Thyroid gland (tissue), 4 donors: ENCODE measurements at regions of chr5 and their contacts with region 1.

Region 1: DNA sequence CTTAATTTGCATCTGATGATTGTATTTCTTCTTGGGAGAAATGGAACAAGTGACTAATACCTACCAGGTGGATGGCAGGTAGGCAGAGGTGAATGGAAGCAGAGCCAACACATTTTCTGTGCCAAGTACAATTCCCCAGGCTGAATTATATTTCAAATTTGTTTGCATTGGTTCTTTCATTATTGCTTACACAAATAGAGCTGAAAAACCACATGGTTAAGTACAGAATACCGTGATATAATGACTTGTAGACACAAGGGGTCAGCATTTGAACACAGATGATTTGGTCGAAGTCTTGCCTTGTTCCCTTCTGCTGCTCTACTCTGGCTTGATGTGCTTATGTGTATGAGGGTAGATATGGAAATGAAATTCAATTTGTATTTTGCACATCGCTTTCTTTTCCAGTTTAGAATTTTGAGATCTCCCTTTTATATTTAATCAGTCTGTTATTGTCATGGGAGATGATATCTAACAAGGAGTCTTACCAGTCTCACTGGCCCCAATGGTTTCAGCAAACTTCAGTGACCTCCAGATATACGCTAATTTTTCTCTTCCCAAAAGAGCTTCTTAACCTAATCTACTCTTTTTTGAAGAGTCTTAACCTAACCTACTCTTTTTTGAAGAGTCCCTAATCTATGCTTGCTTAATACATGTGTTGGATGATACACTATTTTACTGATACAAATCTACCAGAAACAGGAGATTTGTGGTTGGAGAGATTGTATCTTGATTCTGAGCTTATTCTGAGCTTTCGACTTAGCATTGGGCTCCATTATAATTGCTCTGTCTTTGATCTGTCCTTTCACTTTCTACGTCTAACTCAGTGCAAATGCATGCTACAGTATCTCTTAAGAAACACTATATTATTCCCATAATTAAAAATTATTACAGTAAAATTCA is 88.1 kb downstream of the PCSK1 start:
- DNase-seq: no peak
- H3K4me3 ChIP-seq: no peak overlapping the region
- H3K27ac ChIP-seq: no peak overlapping the region
- H3K4me1 ChIP-seq: no peaks in the 10 kb centered on the region
- H3K27me3 ChIP-seq: no peaks in the 10 kb centered on the region
- CTCF ChIP-seq: peak in 4 of 6 experiments; percentile 23 to 43 (median 38)
- POLR2A ChIP-seq: no peak

Region 2: GRCh38 chr5:96503501-96504236 is 158.7 kb after region 1 on chr5:
- intact Hi-C with region 1: no loop called
- DNase-seq: no peak
- H3K4me3 ChIP-seq: no peak overlapping the region
- H3K27ac ChIP-seq: no peak overlapping the region
- H3K4me1 ChIP-seq: no peaks in the 10 kb centered on the region
- H3K27me3 ChIP-seq: no peaks in the 10 kb centered on the region
- CTCF ChIP-seq: no peak
- POLR2A ChIP-seq: no peak

Region 3: GRCh38 chr5:96601811-96602244 is 256.9 kb after region 1 on chr5:
- intact Hi-C with region 1: loop called (anchors 5 kb)
- DNase-seq: peak; percentile 19 to 28
- H3K4me3 ChIP-seq: no peak overlapping the region
- H3K27ac ChIP-seq: no peak overlapping the region
- H3K4me1 ChIP-seq: no peaks in the 10 kb centered on the region
- H3K27me3 ChIP-seq: no peaks in the 10 kb centered on the region
- CTCF ChIP-seq: peak; percentile 42 to 83 (median 66)
- POLR2A ChIP-seq: no peak